ENCODE measurements at regions of chr11 and their contacts with region 1.

Region 1: DNA sequence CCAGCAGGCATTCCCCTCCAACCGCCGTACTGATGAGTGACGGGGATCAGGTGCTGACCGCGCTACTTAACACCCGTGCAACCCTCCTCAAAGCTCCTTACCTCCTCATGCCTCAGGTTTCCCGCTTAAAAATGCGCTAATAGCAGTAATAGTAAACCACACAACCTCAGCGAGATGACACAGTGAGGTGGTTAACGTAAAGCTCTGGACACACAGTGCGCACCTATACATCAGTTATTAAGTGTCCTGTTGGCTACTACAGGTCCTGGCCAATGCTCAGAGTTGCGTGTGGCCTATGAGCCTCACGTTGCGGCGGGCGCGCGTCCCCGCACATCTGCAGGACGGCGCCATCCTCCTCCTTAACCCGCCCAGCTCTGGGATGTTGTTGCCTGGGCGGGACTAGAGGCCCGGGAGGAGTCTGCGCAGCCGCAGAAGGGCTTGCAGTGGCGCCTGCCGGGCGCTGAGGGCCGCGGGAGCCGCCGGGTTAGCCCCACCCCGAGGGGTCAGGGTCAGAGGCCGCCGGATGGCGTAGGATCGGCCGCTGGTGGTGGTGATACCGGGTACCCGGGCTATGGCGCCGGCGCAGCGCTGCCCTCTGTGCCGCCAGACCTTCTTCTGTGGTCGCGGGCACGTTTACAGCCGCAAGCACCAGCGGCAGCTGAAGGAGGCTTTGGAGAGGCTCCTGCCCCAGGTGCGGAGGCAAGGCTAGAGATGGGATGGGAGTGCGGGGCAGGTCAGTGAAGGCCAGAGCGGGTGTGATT is at the start of gene CENATAC:
- DNase-seq: peak; percentile 94 to 97 (median 95)
- H3K4me3 ChIP-seq: peak within 1 kb of the TSS; percentile 80
- H3K27ac ChIP-seq: peak within 1 kb of the TSS; percentile 63 to 66
- H3K4me1 ChIP-seq: peaks cover 7% of the 10 kb centered on the region
- H3K27me3 ChIP-seq: no peaks in the 10 kb centered on the region
- CTCF ChIP-seq: peak in 2 of 3 donors; percentile 21 to 23
- EP300 ChIP-seq: no peak
- POLR2A ChIP-seq: peak; percentile 57
- total RNA-seq, gene CENATAC: 23.4 to 51.0 (median 27.8) TPM

Region 2: GRCh38 chr11:118768690-118769089 is 229.1 kb before region 1 on chr11:
- intact Hi-C with region 1: no loop called
- DNase-seq: no peak
- H3K4me3 ChIP-seq: no peak overlapping the region
- H3K27ac ChIP-seq: no peak overlapping the region
- H3K4me1 ChIP-seq: peaks cover 14% of the 10 kb centered on the region
- H3K27me3 ChIP-seq: no peaks in the 10 kb centered on the region
- CTCF ChIP-seq: no peak
- EP300 ChIP-seq: no peak
- POLR2A ChIP-seq: no peak

Region 3: DNA sequence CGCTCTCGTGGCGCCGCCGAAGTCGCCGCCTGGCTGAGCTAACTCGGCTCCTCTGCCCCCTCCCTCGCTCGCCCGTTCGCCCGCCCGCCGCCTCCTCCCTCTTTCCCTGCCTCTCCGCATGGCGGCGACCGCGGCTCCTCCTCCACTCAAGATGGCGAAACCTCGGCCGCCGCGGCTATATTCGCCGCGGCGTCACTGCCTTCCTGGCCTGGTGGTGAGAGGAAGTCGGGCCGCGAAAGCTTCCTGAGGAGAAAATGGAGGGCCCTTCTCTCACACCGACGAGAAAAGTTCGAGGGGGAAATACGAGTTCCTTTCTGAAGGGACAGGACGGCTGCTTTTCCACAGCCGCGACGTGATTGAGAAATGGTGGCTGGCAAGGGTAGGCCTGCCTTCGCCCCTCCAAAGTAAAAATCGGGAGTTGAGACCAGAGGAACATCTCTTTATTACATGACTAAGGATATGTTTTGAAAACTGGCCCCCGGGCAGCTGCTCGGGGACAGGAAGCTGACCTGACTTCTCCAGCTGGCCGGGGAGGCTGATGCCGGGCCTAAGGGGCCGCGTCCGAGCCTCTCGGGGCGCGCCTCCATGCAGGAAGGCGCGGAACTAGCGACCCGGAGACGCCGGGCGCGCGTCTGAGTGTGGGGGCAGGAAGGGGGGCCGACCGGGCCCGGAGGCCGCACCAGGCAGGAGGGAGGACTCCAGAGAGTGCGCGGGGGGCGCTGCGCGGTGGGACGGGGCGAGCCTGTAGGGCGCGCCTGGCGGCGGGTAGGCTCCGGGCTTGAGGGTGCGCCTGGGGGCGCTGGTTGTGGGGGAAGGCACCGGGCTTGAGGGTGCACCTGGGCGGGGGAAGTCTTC is 206.5 kb before region 1 on chr11 and contains the start of gene DDX6:
- intact Hi-C with region 1: no loop called
- DNase-seq: peak; percentile 89 to 94 (median 92)
- H3K4me3 ChIP-seq: peak within 1 kb of the TSS; percentile 71
- H3K27ac ChIP-seq: peak within 1 kb of the TSS; percentile 99
- H3K4me1 ChIP-seq: peaks cover 17% of the 10 kb centered on the region
- H3K27me3 ChIP-seq: no peaks in the 10 kb centered on the region
- CTCF ChIP-seq: peak; percentile 32 to 65 (median 63)
- EP300 ChIP-seq: no peak
- POLR2A ChIP-seq: peak; percentile 86
- total RNA-seq, gene DDX6: 81.6 to 212 (median 158) TPM

Region 4: GRCh38 chr11:118918128-118918685 is 79.6 kb before region 1 on chr11:
- intact Hi-C with region 1: no loop called
- DNase-seq: peak; percentile 74 to 90 (median 79)
- H3K4me3 ChIP-seq: peak overlapping the region; percentile 99
- H3K27ac ChIP-seq: peak overlapping the region; percentile 89 to 94
- H3K4me1 ChIP-seq: peaks cover 53% of the 10 kb centered on the region
- H3K27me3 ChIP-seq: no peaks in the 10 kb centered on the region
- CTCF ChIP-seq: peak in 2 of 3 donors; percentile 16 to 39
- EP300 ChIP-seq: no peak
- POLR2A ChIP-seq: peak; percentile 62

Region 5: DNA sequence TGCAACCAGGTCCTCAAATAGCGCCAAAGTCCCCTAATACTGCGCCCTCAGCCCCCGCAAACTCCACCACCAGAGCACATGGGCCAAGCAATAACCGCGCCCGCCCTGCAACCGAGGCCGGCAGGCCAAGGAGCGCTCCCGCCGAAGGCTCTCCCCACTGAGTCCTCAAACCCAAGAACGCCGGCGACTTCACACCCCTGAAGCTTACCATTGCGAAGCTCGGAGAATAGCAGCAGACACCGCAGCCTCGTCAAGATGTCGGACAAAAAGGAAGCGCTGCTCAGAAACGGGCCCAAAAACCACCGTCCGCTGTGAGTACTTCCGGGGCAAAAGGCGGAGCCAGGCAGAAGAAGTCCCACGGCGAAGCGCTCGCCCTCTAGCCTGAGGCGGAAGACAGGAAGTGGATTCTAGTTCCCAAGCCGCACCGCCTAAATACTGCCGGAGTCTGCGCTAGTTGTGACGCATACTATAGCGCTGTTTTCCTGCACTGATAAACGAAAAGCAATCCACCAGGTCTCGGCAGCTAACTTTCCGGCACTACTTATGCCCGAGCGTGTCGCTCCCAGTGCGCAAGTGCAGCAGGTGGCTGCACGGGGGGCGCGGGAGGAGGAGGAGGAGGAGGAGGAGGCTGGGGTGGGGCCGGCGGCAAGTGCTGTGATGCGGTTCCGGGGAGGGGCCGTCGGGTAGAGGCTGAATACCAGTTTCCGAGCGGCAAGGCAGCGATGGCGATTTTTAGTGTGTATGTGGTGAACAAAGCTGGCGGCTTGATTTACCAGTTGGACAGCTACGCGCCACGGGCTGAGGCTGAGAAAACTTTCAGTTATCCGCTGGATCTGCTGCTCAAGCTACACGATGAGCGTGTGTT is 20.5 kb after region 1 on chr11 and contains the starts of genes RPS25 and TRAPPC4:
- intact Hi-C with region 1: loop called in 1 of 4 experiments (anchors 2 kb)
- DNase-seq: peak; percentile 92 to 96 (median 95)
- H3K4me3 ChIP-seq: peak within 1 kb of the TSS; percentile 71
- H3K27ac ChIP-seq: peak within 1 kb of the TSS; percentile 71 to 85
- H3K4me1 ChIP-seq: peaks cover 9% of the 10 kb centered on the region
- H3K27me3 ChIP-seq: no peaks in the 10 kb centered on the region
- CTCF ChIP-seq: no peak
- EP300 ChIP-seq: no peak
- POLR2A ChIP-seq: peak; percentile 70
- total RNA-seq, gene RPS25: 1,999 to 7,045 (median 2,410) TPM
- total RNA-seq, gene TRAPPC4: 34.0 to 59.1 (median 57.5) TPM

Measured in ovary (tissue), 10 donors.